SK-N-SH (cell line): ENCODE measurements at regions of chr18 and their contacts with region 1.

Region 1: DNA sequence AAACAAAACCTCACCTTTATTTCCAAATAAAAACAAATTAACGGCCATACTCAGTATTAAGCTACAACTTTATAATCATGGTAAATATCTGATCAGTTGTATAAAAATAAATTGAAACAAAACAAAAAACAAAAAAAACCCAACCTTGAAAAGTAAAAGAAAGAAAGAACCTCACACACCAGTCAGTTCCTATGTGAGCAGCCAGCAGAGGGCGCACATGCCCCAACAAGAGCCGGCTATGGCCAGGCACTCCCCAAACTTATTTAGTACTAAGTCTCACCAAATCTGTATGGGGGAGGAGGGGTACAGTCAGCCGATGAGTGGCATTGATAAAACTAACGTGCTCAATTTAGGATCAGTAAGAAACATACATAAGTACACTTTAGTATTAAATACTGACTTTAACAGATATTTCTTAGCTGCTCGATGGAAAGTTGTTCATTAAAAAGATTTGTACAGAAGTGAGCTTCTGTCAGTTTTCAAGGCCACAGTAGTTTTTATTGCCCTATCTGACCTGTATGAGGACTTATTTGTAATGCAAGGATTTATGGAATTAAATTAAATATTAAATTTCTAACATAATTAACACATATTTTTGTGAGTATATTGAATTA is 172.6 kb downstream of the TCF4 start:
- DNase-seq: peak; percentile 48
- H3K4me3 ChIP-seq: no peak overlapping the region; a peak in 1 of 4 replicates
- H3K27ac ChIP-seq: peak overlapping the region in 1 of 2 experiments; percentile 43; a peak in 2 of 4 replicates
- H3K4me1 ChIP-seq: peaks cover 27 to 34% of the 10 kb centered on the region in 2 experiments; a peak in 3 of 4 replicates
- H3K27me3 ChIP-seq: no peaks in the 10 kb centered on the region
- CTCF ChIP-seq: peak; percentile 97
- EP300 ChIP-seq: no peak
- RAD21 ChIP-seq: peak; percentile 93

Region 2: GRCh38 chr18:55343396-55344073 is 71.8 kb before region 1 on chr18:
- CTCF ChIA-PET with region 1: interaction called, 30 read pairs
- POLR2A ChIA-PET with region 1: no interaction called
- DNase-seq: no peak
- H3K4me3 ChIP-seq: no peak overlapping the region
- H3K27ac ChIP-seq: peak overlapping the region; percentile 15 to 43; a peak in 3 of 4 replicates
- H3K4me1 ChIP-seq: peaks cover 30 to 43% of the 10 kb centered on the region in 2 experiments
- H3K27me3 ChIP-seq: no peaks in the 10 kb centered on the region
- CTCF ChIP-seq: peak; percentile 79
- EP300 ChIP-seq: no peak
- RAD21 ChIP-seq: peak; percentile 86

Region 3: DNA sequence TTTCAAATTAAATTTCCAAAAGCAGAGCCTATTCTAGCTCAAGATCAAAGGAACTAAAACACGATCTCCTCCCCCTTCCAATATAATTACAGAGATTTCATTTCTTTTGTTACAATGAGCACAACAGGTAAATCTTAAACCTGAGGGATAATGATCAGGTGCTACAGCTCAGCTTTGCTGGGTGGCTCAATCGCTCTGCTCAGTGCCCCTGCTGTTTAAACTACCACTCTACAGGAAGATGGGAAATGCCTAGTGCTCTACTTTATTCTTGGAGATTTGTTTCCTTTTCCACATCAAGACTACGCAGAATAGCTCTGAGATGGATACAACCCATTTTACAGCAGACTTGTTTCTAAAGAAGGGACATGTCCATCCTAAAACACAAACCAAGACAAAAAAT is 10.3 kb after region 1 on chr18:
- CTCF ChIA-PET with region 1: interaction called, 29 read pairs
- POLR2A ChIA-PET with region 1: no interaction called
- DNase-seq: no peak
- H3K4me3 ChIP-seq: no peak overlapping the region
- H3K27ac ChIP-seq: no peak overlapping the region
- H3K4me1 ChIP-seq: peaks cover 20 to 30% of the 10 kb centered on the region in 2 experiments; a peak in 3 of 4 replicates
- H3K27me3 ChIP-seq: no peaks in the 10 kb centered on the region
- CTCF ChIP-seq: no peak
- EP300 ChIP-seq: no peak
- RAD21 ChIP-seq: no peak

Region 4: DNA sequence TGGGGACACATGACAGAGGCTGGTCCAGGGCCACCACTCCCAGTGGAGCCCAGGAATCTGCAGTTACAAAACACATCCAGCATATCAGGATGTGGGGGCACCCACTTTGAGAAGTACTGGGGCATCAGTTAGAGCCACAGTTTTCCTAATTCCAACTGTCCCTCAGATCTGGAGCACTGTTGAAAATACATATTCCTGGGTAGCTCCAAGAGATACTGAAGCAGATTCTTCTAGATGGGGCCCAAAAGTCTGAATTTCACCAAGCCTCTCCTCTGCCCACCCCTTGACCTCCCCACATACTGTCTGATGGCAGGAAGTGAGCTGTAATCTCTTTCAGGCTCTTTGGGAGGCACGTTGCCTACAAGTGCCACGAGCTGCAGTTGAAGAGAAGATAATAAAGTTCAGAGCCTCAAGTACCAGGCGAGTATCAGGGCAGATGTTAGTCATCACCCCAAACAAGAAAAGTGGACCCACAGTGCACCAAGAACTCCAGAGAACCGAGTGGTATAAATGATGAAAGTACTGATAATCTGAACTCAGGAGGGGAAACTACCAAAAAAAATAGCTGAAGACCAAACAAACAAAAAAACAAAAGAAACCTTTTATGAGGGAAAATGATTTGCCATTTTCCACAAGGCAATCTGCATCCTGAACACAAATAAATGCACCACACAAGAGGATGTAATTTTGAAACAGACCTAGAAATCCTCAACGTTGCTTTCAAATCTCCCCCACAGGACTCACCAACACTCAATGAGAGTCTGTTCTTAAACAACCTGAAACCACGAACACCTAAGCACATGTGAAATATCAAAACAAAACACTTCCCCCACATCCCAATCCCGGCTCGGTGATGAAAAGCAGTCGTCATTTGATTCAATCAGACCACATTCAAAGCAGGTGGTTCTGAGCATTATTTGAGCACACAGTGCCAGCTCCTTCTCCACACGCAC is 73.9 kb after region 1 on chr18:
- CTCF ChIA-PET with region 1: interaction called, 14 read pairs
- POLR2A ChIA-PET with region 1: no interaction called
- DNase-seq: peak; percentile 46
- H3K4me3 ChIP-seq: no peak overlapping the region; a peak in 1 of 4 replicates
- H3K27ac ChIP-seq: peak overlapping the region; percentile 28 to 91
- H3K4me1 ChIP-seq: peaks cover 28 to 30% of the 10 kb centered on the region in 2 experiments
- H3K27me3 ChIP-seq: no peaks in the 10 kb centered on the region
- CTCF ChIP-seq: no peak
- EP300 ChIP-seq: peak in 1 of 2 experiments; percentile 88; a peak in 2 of 4 replicates
- RAD21 ChIP-seq: no peak; the same call in 1 of the 2 replicates

Region 5: DNA sequence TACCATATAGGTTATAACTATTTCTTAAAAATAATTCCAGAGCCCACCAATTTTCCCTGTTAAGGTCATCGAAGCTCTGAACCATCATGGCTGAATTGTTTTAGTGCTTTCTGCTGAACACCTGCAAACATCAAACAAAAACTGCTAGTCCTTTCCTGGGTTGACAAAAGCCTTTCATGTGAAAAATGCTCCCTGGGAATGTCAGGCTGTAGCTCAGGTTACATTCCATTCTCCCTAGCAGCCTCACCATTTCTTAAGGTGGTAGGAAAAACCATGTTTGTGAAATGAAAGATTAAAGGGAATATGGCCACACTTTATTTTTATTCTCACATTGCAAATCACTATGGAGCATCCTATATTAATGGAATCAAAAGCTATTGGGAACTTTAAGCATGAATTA is 167.0 kb after region 1 on chr18:
- CTCF ChIA-PET with region 1: interaction called, 17 read pairs
- POLR2A ChIA-PET with region 1: interaction called, 4 read pairs
- DNase-seq: no peak
- H3K4me3 ChIP-seq: no peak overlapping the region
- H3K27ac ChIP-seq: no peak overlapping the region; a peak in 1 of 4 replicates
- H3K4me1 ChIP-seq: peaks cover 0 to 38% of the 10 kb centered on the region in 2 experiments; a peak in 3 of 4 replicates
- H3K27me3 ChIP-seq: no peaks in the 10 kb centered on the region
- CTCF ChIP-seq: no peak
- EP300 ChIP-seq: no peak
- RAD21 ChIP-seq: no peak; the same call in 1 of the 2 replicates

Region 6: DNA sequence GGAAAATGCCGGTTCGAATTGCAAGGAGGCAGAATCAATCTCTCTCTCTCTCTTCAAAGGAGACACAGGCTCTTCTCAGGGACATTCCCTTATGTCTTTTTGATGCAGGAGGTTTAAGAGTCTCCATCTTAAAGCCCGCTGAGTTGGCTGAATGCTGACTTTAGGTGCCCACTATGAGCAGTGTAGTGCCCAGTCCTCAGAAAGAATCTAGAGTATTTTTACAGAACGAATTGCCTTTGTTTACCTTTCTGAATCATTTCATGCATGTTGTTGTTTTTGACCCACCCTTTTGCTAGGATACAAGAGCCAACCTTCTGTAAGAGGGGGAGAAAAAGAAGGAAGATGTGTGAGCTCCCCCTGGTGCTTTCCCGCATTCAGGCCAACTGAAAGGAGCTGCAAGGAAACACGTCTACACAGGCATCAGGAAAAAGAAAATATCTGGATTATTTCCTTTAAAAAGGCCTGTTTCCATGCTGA is 366.2 kb after region 1 on chr18:
- CTCF ChIA-PET with region 1: interaction called, 27 read pairs
- POLR2A ChIA-PET with region 1: interaction called, 4 read pairs
- DNase-seq: peak; percentile 74
- H3K4me3 ChIP-seq: no peak overlapping the region; a peak in 1 of 4 replicates
- H3K27ac ChIP-seq: peak overlapping the region in 1 of 2 experiments; percentile 50; a peak in 2 of 4 replicates
- H3K4me1 ChIP-seq: peaks cover 0 to 10% of the 10 kb centered on the region in 2 experiments; a peak in 3 of 4 replicates
- H3K27me3 ChIP-seq: no peaks in the 10 kb centered on the region
- CTCF ChIP-seq: peak; percentile 79
- EP300 ChIP-seq: no peak
- RAD21 ChIP-seq: peak; percentile 92